ENCODE measurements at regions of chr1 and their contacts with region 1.

Region 1: GRCh38 chr1:90729504-90730242 is 12.6 kb upstream of the BARHL2 start:
- DNase-seq: no peak
- ATAC-seq: no peak
- H3K4me3 Mint-ChIP-seq: peak overlapping the region; percentile 41
- H3K27ac Mint-ChIP-seq: no peak overlapping the region
- H3K4me1 Mint-ChIP-seq: peaks cover 39% of the 10 kb centered on the region
- H3K27me3 Mint-ChIP-seq: peaks cover 73% of the 10 kb centered on the region
- CTCF ChIP-seq: no peak

Region 2: DNA sequence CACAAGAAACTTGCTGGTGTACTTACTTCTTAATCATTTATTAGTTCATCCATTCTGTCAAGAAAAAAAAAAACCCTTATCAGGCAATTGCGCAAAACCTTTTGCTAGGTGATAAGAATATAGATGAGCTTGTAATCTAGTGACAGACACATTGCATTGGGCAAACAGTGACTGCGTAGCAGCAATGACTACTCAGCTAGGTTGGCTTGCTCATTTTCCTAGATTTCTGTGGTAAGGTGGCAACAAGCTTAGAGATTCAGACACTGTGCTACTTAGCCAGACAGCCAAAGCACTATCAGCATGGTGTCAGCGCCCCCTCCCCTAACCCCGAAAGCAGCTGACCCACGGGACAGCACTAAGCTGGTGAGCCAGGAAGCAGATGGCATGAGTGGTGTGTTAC is 215.7 kb before region 1 on chr1:
- CTCF ChIA-PET with region 1: no interaction called
- POLR2A ChIA-PET with region 1: no interaction called
- intact Hi-C with region 1: no loop called
- DNase-seq: no peak
- ATAC-seq: no peak
- H3K4me3 Mint-ChIP-seq: no peak overlapping the region
- H3K27ac Mint-ChIP-seq: no peak overlapping the region
- H3K4me1 Mint-ChIP-seq: no peaks in the 10 kb centered on the region
- H3K27me3 Mint-ChIP-seq: peaks cover 4% of the 10 kb centered on the region
- CTCF ChIP-seq: no peak

Region 3: DNA sequence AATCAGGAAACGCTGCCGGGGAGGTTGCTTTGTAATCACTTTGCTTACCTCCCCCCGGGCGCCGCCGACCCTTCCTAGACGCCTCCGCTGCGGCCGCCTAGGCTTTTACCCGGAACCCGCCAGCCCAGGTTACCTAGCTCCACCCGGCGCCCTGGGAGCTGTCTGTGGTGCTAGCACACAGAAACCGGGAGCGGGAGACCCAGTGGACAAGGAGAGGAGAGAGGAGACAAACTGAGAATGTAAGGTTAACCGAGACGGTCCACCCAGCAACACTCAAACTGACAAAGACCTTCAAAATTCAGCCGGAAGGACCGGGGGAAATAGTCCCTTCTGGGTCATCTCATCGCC is 22.3 kb before region 1 on chr1:
- CTCF ChIA-PET with region 1: no interaction called
- POLR2A ChIA-PET with region 1: no interaction called
- intact Hi-C with region 1: loop called (anchors 2 kb)
- DNase-seq: no peak
- ATAC-seq: no peak
- H3K4me3 Mint-ChIP-seq: no peak overlapping the region
- H3K27ac Mint-ChIP-seq: no peak overlapping the region
- H3K4me1 Mint-ChIP-seq: peaks cover 10% of the 10 kb centered on the region
- H3K27me3 Mint-ChIP-seq: peaks cover 65% of the 10 kb centered on the region
- CTCF ChIP-seq: no peak

Region 4: DNA sequence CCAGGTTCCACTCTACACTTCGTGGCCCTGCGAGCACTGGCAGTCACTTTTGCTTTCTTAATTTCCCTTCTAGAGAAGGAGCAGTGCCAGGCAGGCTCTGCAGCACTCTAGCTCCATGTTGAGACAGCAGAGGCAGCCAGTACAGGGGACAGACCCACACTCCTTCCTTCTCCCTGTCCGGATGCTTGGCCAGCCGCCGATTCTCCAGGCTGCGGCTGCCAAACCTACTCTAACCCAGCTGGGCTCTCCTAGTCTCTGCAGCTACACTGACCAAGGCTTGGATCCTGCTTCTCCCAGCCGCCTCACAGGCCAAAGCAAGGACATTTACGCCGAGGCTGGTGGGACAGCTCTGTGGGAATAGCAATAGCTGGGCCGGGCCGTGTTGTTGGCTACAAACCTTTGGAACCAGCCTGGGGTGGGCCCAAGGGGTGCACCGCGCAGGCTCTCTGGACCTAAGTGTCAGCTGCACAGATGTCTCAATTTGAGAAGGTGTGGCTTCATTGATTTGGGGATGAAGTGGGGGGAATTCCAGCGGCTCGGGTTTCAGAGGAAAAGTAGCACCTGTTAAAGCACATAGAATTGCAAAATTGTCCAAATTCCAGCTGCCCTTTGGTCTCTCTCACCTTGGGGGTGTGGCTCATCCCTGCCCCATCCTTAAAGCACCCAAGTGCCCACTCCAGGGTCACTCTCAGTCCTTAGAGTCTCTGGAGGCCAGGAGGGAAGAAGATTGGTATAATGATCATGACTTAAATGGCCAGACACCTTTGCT is 15.7 kb before region 1 on chr1:
- CTCF ChIA-PET with region 1: no interaction called
- POLR2A ChIA-PET with region 1: no interaction called
- intact Hi-C with region 1: loop called (anchors 2 kb)
- DNase-seq: no peak
- ATAC-seq: no peak
- H3K4me3 Mint-ChIP-seq: no peak overlapping the region
- H3K27ac Mint-ChIP-seq: no peak overlapping the region
- H3K4me1 Mint-ChIP-seq: peaks cover 9% of the 10 kb centered on the region
- H3K27me3 Mint-ChIP-seq: peaks cover 69% of the 10 kb centered on the region
- CTCF ChIP-seq: no peak

Region 5: GRCh38 chr1:90834886-90835660 is 105.4 kb after region 1 on chr1:
- CTCF ChIA-PET with region 1: no interaction called
- POLR2A ChIA-PET with region 1: no interaction called
- intact Hi-C with region 1: loop called (anchors 2 kb)
- DNase-seq: no peak
- ATAC-seq: no peak
- H3K4me3 Mint-ChIP-seq: peak overlapping the region; percentile 3
- H3K27ac Mint-ChIP-seq: no peak overlapping the region
- H3K4me1 Mint-ChIP-seq: peaks cover 23% of the 10 kb centered on the region
- H3K27me3 Mint-ChIP-seq: peaks cover 75% of the 10 kb centered on the region
- CTCF ChIP-seq: no peak